Caco-2 (cell line): ENCODE measurements at regions of chr9 and their contacts with region 1.

Region 1: GRCh38 chr9:101465392-101465791 is 29.8 kb upstream of the ALDOB start:
- DNase-seq: peak; percentile 64 to 65
- H3K4me3 ChIP-seq: no peak overlapping the region
- H3K4me3 Mint-ChIP-seq: no peak overlapping the region
- H3K27ac Mint-ChIP-seq: no peak overlapping the region
- H3K4me1 ChIP-seq: peaks cover 2% of the 10 kb centered on the region; the same call in 1 of the 2 replicates
- H3K4me1 Mint-ChIP-seq: peaks cover 13% of the 10 kb centered on the region
- H3K27me3 ChIP-seq: no peaks in the 10 kb centered on the region; the same call in 1 of the 2 replicates
- H3K27me3 Mint-ChIP-seq: no peaks in the 10 kb centered on the region
- CTCF ChIP-seq: peak; percentile 54 to 62

Region 2: GRCh38 chr9:101409079-101409477 is 56.3 kb before region 1 on chr9:
- CTCF ChIA-PET with region 1: no interaction called
- POLR2A ChIA-PET with region 1: no interaction called
- intact Hi-C with region 1: no loop called
- DNase-seq: no peak
- H3K4me3 ChIP-seq: no peak overlapping the region
- H3K4me3 Mint-ChIP-seq: no peak overlapping the region
- H3K27ac Mint-ChIP-seq: no peak overlapping the region
- H3K4me1 ChIP-seq: no peaks in the 10 kb centered on the region
- H3K4me1 Mint-ChIP-seq: no peaks in the 10 kb centered on the region
- H3K27me3 ChIP-seq: no peaks in the 10 kb centered on the region
- H3K27me3 Mint-ChIP-seq: no peaks in the 10 kb centered on the region
- CTCF ChIP-seq: no peak

Region 3: GRCh38 chr9:101486693-101487442 is 21.5 kb after region 1 on chr9:
- CTCF ChIA-PET with region 1: no interaction called
- POLR2A ChIA-PET with region 1: no interaction called
- intact Hi-C with region 1: loop called (anchors 2 kb)
- DNase-seq: peak; percentile 38 to 56
- H3K4me3 ChIP-seq: peak overlapping the region; percentile 36
- H3K4me3 Mint-ChIP-seq: peak overlapping the region; percentile 93
- H3K27ac Mint-ChIP-seq: peak overlapping the region; percentile 71
- H3K4me1 ChIP-seq: peaks cover 4% of the 10 kb centered on the region
- H3K4me1 Mint-ChIP-seq: peaks cover 6% of the 10 kb centered on the region
- H3K27me3 ChIP-seq: no peaks in the 10 kb centered on the region; the same call in 1 of the 2 replicates
- H3K27me3 Mint-ChIP-seq: peaks cover 10% of the 10 kb centered on the region
- CTCF ChIP-seq: no peak